ENCODE measurements at regions of chr2 and their contacts with region 1.

Region 1: GRCh38 chr2:209044306-209044705 is 379.5 kb upstream of the MAP2 start:
- DNase-seq: no peak

Region 2: GRCh38 chr2:209062210-209062609 is 17.9 kb after region 1 on chr2:
- intact Hi-C with region 1: loop called in 1 of 2 experiments (anchors 1 kb)
- DNase-seq: no peak

Region 3: DNA sequence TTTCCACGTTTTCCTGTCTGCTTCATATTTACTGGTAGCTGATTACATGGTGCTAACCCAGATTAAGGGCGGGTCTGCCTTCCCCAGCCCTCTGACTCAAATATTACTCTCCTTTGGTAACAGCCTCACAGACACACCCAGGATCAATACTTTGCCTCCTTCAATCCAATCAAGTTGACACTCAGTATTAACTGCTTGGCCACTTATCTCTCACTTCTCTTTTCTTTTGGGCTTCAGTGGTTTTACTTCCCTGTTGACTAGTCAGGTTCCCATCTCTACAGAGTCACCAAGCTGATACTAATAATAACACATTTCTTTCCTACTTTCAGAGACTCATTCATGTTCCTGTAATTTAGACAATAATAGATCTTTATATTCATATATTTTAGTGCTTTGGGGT is 77.4 kb after region 1 on chr2:
- intact Hi-C with region 1: no loop called
- DNase-seq: no peak

Measured in posterior vena cava (tissue), 2 donors.